ENCODE measurements at regions of chrX and their contacts with region 1.

Region 1: DNA sequence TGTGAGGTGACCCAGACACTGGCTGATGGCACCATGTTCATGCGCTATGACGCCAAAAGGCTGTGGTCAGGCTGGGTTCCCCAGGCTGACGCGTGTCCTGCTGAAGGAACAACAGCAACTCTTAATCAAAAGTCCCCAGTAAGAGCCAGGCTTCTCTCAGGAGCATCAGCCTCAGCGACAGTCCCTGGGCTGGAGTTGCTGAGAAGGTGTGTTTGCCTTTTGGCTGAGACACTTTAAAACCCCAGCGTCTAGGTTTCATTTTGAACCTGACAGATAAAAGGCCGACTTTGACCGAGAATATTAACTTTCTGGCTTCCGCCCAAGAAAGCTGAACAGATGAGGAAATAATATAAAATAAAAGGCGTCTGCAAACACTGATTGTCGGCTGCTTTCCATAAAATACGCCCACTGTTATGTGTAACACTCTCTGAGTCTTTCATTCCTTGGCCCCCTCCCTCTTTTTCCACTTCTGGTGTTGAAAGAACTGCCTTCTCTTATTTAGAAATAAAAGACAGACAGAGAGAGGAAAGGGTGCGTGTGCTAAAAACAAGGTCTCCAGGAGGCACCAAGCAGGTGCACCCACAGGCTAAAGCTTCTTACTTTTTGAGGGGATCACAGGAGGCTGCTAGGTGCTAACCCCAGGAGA is 373.6 kb downstream of the MID1IP1 start:
- DNase-seq: peak; percentile 7
- H3K4me3 Mint-ChIP-seq: peak overlapping the region; percentile 22
- H3K27ac Mint-ChIP-seq: peak overlapping the region; percentile 89
- H3K4me1 Mint-ChIP-seq: peaks cover 33% of the 10 kb centered on the region
- H3K27me3 Mint-ChIP-seq: no peaks in the 10 kb centered on the region

Region 2: GRCh38 chrX:39104745-39105144 is 70.2 kb before region 1 on chrX:
- intact Hi-C with region 1: no loop called
- DNase-seq: no peak
- H3K4me3 Mint-ChIP-seq: no peak overlapping the region
- H3K27ac Mint-ChIP-seq: no peak overlapping the region
- H3K4me1 Mint-ChIP-seq: no peaks in the 10 kb centered on the region
- H3K27me3 Mint-ChIP-seq: peaks cover 6% of the 10 kb centered on the region

Region 3: DNA sequence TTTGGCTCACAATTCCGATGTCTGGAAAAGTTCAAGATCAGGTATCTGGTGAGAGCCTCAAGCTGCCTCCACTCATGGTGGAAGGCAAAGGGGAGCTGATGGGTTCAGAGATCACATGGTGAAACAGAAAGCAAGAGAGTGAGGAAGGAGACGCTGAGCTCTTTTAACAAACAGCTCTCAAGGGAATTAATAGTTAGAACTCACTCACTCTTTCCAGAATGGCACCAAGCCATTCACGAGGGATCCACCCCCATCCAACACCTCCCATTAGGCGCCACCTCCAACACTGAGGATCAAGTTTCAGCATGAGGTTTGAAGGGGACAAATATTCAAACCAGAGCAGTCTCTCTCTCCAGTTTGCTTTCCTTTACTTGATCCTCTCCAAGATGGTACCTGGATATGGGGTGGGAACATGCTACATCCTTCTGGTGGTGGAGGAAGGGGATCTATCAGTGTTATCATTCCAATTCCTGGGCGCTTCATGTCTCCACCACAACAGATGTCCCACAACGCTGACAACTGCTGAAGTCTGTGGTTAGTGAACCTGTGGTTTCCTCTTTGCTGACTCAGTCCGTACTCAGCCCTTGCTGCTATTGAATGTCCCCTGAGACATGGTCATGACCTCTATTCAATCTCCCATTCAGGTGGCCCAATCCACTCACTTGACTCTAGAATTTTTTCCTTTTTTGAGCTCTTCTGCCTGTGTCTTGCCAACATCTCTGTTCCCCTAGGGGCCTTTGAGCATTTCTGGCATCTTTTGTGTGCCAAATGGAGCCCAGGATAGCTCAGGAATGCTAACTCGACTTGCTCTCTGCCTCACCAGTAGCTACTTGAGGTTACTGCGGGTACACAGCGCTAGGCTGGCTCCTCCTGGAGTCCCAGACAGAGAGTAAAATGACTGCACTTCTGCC is 21.6 kb after region 1 on chrX:
- intact Hi-C with region 1: loop called (anchors 1 kb)
- DNase-seq: peak; percentile 44
- H3K4me3 Mint-ChIP-seq: peak overlapping the region; percentile 58
- H3K27ac Mint-ChIP-seq: peak overlapping the region; percentile 87
- H3K4me1 Mint-ChIP-seq: peaks cover 52% of the 10 kb centered on the region
- H3K27me3 Mint-ChIP-seq: no peaks in the 10 kb centered on the region

Region 4: GRCh38 chrX:39201305-39201990 is 26.6 kb after region 1 on chrX:
- intact Hi-C with region 1: loop called (anchors 1 kb)
- DNase-seq: no peak
- H3K4me3 Mint-ChIP-seq: no peak overlapping the region
- H3K27ac Mint-ChIP-seq: peak overlapping the region; percentile 79
- H3K4me1 Mint-ChIP-seq: peaks cover 82% of the 10 kb centered on the region
- H3K27me3 Mint-ChIP-seq: no peaks in the 10 kb centered on the region